HCT116 (cell line): ENCODE measurements at regions of chr5 and their contacts with region 1.

Region 1: GRCh38 chr5:140244525-140245025 is 58.3 kb downstream of the PFDN1 start:
- DNase-seq: no peak
- ATAC-seq: peak; percentile 63
- H3K4me3 ChIP-seq: no peak overlapping the region
- H3K27ac ChIP-seq: no peak overlapping the region
- H3K4me1 ChIP-seq: peaks cover 25 to 33% of the 10 kb centered on the region in 2 experiments
- H3K27me3 ChIP-seq: no peaks in the 10 kb centered on the region
- CTCF ChIP-seq: peak in 2 of 3 experiments; percentile 72 to 81; a peak in 4 of 6 replicates
- POLR2A ChIP-seq: no peak
- RAD21 ChIP-seq: no peak

Region 2: GRCh38 chr5:139312075-139312474 is 932.5 kb before region 1 on chr5:
- CTCF ChIA-PET with region 1: no interaction called
- POLR2A ChIA-PET with region 1: no interaction called
- RAD21 ChIA-PET with region 1: no interaction called
- intact Hi-C with region 1: no loop called
- DNase-seq: no peak
- ATAC-seq: no peak
- H3K4me3 ChIP-seq: no peak overlapping the region
- H3K27ac ChIP-seq: peak overlapping the region; percentile 39; the same call in 1 of the 2 replicates
- H3K4me1 ChIP-seq: peaks cover 36 to 57% of the 10 kb centered on the region in 2 experiments
- H3K27me3 ChIP-seq: no peaks in the 10 kb centered on the region
- CTCF ChIP-seq: no peak
- POLR2A ChIP-seq: no peak
- RAD21 ChIP-seq: no peak

Region 3: DNA sequence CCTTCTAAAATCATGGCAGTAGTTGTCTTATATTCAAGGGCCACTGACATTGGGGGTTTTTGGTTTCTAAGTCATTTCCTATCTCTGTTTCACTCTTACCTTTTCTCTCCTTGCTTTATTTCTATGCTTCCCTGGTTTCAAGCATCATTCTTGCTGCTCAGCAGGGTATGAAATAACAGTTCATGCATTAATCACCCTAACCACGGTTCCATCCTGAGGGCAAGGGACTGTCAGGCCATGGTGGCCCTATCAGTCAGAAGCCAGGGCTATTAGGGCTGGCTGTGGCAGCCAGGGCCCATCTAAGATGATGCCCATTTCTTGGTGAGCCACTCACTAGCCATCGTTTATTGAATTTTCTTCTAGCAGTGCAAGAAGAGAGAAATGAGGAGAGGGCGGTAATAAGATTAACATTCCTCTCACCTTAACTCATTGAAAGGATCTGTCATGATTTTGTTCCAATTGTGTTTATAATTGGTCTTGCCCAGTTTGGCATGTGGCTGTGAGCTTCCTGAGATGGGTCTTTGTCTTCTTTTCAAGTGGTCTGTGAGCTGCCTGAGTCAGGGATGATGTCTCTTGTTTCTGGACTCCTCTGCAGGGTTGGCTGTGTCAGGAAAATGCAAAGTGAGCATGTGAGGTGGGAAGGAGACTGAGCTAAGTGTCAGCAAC is 24.4 kb before region 1 on chr5:
- CTCF ChIA-PET with region 1: interaction called, 17 read pairs
- POLR2A ChIA-PET with region 1: no interaction called
- RAD21 ChIA-PET with region 1: no interaction called
- intact Hi-C with region 1: no loop called
- DNase-seq: no peak
- ATAC-seq: peak; percentile 52
- H3K4me3 ChIP-seq: peak overlapping the region in 1 of 2 experiments; percentile 45; a peak in 2 of 4 replicates
- H3K27ac ChIP-seq: peak overlapping the region; percentile 87
- H3K4me1 ChIP-seq: peaks cover 77 to 89% of the 10 kb centered on the region in 2 experiments
- H3K27me3 ChIP-seq: no peaks in the 10 kb centered on the region
- CTCF ChIP-seq: no peak
- POLR2A ChIP-seq: no peak
- RAD21 ChIP-seq: no peak

Region 4: GRCh38 chr5:140261403-140262171 is 17.0 kb after region 1 on chr5:
- CTCF ChIA-PET with region 1: interaction called, 22 read pairs
- POLR2A ChIA-PET with region 1: no interaction called
- RAD21 ChIA-PET with region 1: interaction called in 1 of 2 experiments, 3 read pairs
- intact Hi-C with region 1: no loop called
- DNase-seq: peak; percentile 79
- ATAC-seq: peak; percentile 96
- H3K4me3 ChIP-seq: peak overlapping the region in 1 of 2 experiments; percentile 16; a peak in 2 of 4 replicates
- H3K27ac ChIP-seq: peak overlapping the region; percentile 38; the same call in 1 of the 2 replicates
- H3K4me1 ChIP-seq: peaks cover 27 to 48% of the 10 kb centered on the region in 2 experiments
- H3K27me3 ChIP-seq: no peaks in the 10 kb centered on the region
- CTCF ChIP-seq: 0 out of 6 replicates have a peak, but pooled peaks of 2 of the 3 experiments have one; percentile 3 to 10
- POLR2A ChIP-seq: no peak
- RAD21 ChIP-seq: peak; percentile 32

Region 5: DNA sequence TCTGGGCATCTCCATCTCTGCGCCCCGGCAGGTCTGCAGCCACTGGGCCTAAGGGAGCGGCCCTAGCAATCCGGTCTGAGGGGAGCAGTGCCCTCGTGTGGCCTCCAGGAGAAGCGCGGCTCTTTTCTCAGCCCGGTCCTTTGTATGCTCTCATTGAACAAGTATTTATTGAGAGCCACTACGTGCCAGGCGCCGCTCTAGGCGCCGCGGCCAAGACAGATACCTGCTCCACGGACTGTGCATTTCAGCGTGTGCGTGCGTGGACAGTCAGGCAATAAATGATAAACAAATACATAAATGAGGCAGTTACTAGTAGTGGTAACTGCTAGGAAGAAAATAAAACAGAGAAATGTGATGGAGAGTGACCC is 113.1 kb after region 1 on chr5:
- CTCF ChIA-PET with region 1: interaction called, 186 read pairs
- POLR2A ChIA-PET with region 1: interaction called, 16 read pairs
- RAD21 ChIA-PET with region 1: interaction called, 15 to 17 read pairs
- intact Hi-C with region 1: loop called (anchors 1 kb)
- DNase-seq: peak; percentile 76
- ATAC-seq: peak; percentile 94
- H3K4me3 ChIP-seq: peak overlapping the region; percentile 13 to 30; a peak in 3 of 4 replicates
- H3K27ac ChIP-seq: no peak overlapping the region
- H3K4me1 ChIP-seq: peaks cover 0 to 21% of the 10 kb centered on the region in 2 experiments; a peak in 2 of 4 replicates
- H3K27me3 ChIP-seq: no peaks in the 10 kb centered on the region
- CTCF ChIP-seq: peak in 2 of 3 experiments; percentile 91 to 92; a peak in 4 of 6 replicates
- POLR2A ChIP-seq: no peak
- RAD21 ChIP-seq: no peak

Region 6: DNA sequence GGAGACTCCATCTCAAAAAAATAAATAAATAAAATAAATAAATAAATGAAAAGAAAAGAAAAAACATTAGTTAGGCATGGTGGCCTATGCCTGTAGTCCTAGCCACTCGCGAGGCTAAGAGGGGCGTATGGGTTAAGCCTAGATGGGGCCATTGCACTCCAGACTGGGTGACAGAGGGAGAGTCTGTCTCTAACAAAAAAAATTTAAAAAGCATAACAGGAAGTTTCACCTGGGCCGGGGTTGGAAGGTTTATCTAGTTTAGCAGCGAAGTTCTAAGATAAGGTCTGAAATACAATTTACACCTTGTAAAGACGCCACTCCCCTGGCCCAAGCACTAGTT is 473.6 kb after region 1 on chr5:
- CTCF ChIA-PET with region 1: interaction called, 13 read pairs
- POLR2A ChIA-PET with region 1: interaction called, 4 read pairs
- RAD21 ChIA-PET with region 1: interaction called in 1 of 2 experiments, 3 read pairs
- intact Hi-C with region 1: loop called (anchors 5 kb)
- DNase-seq: no peak
- ATAC-seq: peak; percentile 4
- H3K4me3 ChIP-seq: peak overlapping the region in 1 of 2 experiments; percentile 42; a peak in 1 of 4 replicates
- H3K27ac ChIP-seq: peak overlapping the region; percentile 80
- H3K4me1 ChIP-seq: peaks cover 12 to 28% of the 10 kb centered on the region in 2 experiments
- H3K27me3 ChIP-seq: no peaks in the 10 kb centered on the region
- CTCF ChIP-seq: no peak
- POLR2A ChIP-seq: no peak
- RAD21 ChIP-seq: no peak